ENCODE measurements at regions of chr1 and their contacts with region 1.

Region 1: DNA sequence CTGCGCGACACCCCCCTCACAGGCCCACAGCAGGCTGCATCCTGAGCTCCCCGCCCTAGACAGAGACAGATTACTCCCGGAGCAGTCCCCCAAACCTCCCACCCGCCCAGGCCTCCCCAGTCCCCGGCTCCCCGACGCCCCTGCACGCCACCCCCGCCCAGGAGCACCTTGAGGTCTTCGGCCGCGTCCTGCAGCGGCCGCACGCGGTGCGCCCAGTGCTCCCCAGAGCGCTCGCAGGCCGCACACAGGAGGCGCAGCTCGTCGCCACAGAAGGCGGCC is 709 bp downstream of the TRIM11 start:
- DNase-seq: no peak
- ATAC-seq: no peak
- H3K4me3 ChIP-seq: peak overlapping the region; percentile 74
- H3K4me3 Mint-ChIP-seq: peak overlapping the region; percentile 80 to 99 (median 94)
- H3K27ac ChIP-seq: peak overlapping the region; percentile 86
- H3K27ac Mint-ChIP-seq: peak overlapping the region; percentile 36 to 92 (median 80)
- H3K4me1 ChIP-seq: peaks cover 36 to 41% of the 10 kb centered on the region in 2 donors
- H3K4me1 Mint-ChIP-seq: peaks cover 46 to 77% (median 56%) of the 10 kb centered on the region in 7 donors
- H3K27me3 ChIP-seq: no peaks in the 10 kb centered on the region
- H3K27me3 Mint-ChIP-seq: no peaks in the 10 kb centered on the region

Region 2: GRCh38 chr1:227728059-227728891 is 677.7 kb before region 1 on chr1:
- CTCF ChIA-PET with region 1: no interaction called
- POLR2A ChIA-PET with region 1: no interaction called
- intact Hi-C with region 1: loop called in 1 of 2 experiments (anchors 5 kb)
- DNase-seq: peak in 7 of 9 donors; percentile 23 to 63 (median 39)
- ATAC-seq: peak; percentile 69
- H3K4me3 ChIP-seq: peak overlapping the region; percentile 59
- H3K4me3 Mint-ChIP-seq: peak overlapping the region; percentile 78 to 89 (median 87)
- H3K27ac ChIP-seq: peak overlapping the region; percentile 69
- H3K27ac Mint-ChIP-seq: peak overlapping the region; percentile 43 to 90 (median 74)
- H3K4me1 ChIP-seq: peaks cover 0 to 10% of the 10 kb centered on the region in 2 donors
- H3K4me1 Mint-ChIP-seq: peaks cover 6 to 29% (median 20%) of the 10 kb centered on the region in 7 donors
- H3K27me3 ChIP-seq: no peaks in the 10 kb centered on the region
- H3K27me3 Mint-ChIP-seq: peaks cover 0 to 11% (median 8%) of the 10 kb centered on the region in 5 donors

Region 3: GRCh38 chr1:228275739-228276421 is 130.0 kb before region 1 on chr1:
- CTCF ChIA-PET with region 1: no interaction called
- POLR2A ChIA-PET with region 1: no interaction called
- intact Hi-C with region 1: loop called (anchors 1 kb)
- DNase-seq: peak; percentile 53 to 88 (median 82)
- ATAC-seq: peak; percentile 96
- H3K4me3 ChIP-seq: peak overlapping the region; percentile 77
- H3K4me3 Mint-ChIP-seq: peak overlapping the region; percentile 71 to 88 (median 82)
- H3K27ac ChIP-seq: peak overlapping the region; percentile 77
- H3K27ac Mint-ChIP-seq: peak overlapping the region in 7 of 9 donors; percentile 21 to 73 (median 60)
- H3K4me1 ChIP-seq: no peaks in the 10 kb centered on the region
- H3K4me1 Mint-ChIP-seq: peaks cover 8 to 20% (median 19%) of the 10 kb centered on the region in 7 donors
- H3K27me3 ChIP-seq: no peaks in the 10 kb centered on the region
- H3K27me3 Mint-ChIP-seq: no peaks in the 10 kb centered on the region

Region 4: GRCh38 chr1:228416217-228416933 is 10.4 kb after region 1 on chr1 and contains the start of gene TRIM17:
- CTCF ChIA-PET with region 1: no interaction called
- POLR2A ChIA-PET with region 1: interaction called, 7 read pairs
- intact Hi-C with region 1: loop called in 1 of 2 experiments (anchors 1 kb)
- DNase-seq: peak in 8 of 9 donors; percentile 15 to 47 (median 31)
- ATAC-seq: peak; percentile 69
- H3K4me3 ChIP-seq: peak within 1 kb of the TSS; percentile 48
- H3K4me3 Mint-ChIP-seq: peak within 1 kb of the TSS; percentile 73 to 91 (median 86)
- H3K27ac ChIP-seq: peak within 1 kb of the TSS; percentile 11
- H3K27ac Mint-ChIP-seq: peak within 1 kb of the TSS in 8 of 9 donors; percentile 24 to 76 (median 38)
- H3K4me1 ChIP-seq: peaks cover 5 to 15% of the 10 kb centered on the region in 2 donors
- H3K4me1 Mint-ChIP-seq: peaks cover 8 to 30% (median 27%) of the 10 kb centered on the region in 7 donors
- H3K27me3 ChIP-seq: no peaks in the 10 kb centered on the region
- H3K27me3 Mint-ChIP-seq: peaks cover 0 to 45% (median 10%) of the 10 kb centered on the region in 5 donors
- total RNA-seq, gene TRIM17: 0.92 to 2.5 (median 1.8) TPM

Region 5: GRCh38 chr1:229507951-229508822 is 1102.3 kb after region 1 on chr1 and contains the start of gene NUP133:
- CTCF ChIA-PET with region 1: no interaction called
- POLR2A ChIA-PET with region 1: no interaction called
- intact Hi-C with region 1: loop called in 1 of 2 experiments (anchors 5 kb)
- DNase-seq: peak; percentile 93 to 97 (median 97)
- ATAC-seq: peak; percentile 98
- H3K4me3 ChIP-seq: peak within 1 kb of the TSS; percentile 91
- H3K4me3 Mint-ChIP-seq: peak within 1 kb of the TSS; percentile 90 to 98 (median 92)
- H3K27ac ChIP-seq: peak within 1 kb of the TSS; percentile 95
- H3K27ac Mint-ChIP-seq: peak within 1 kb of the TSS; percentile 95 to 99 (median 99)
- H3K4me1 ChIP-seq: peaks cover 4 to 13% of the 10 kb centered on the region in 2 donors
- H3K4me1 Mint-ChIP-seq: peaks cover 10 to 47% (median 38%) of the 10 kb centered on the region in 7 donors
- H3K27me3 ChIP-seq: no peaks in the 10 kb centered on the region
- H3K27me3 Mint-ChIP-seq: peaks cover 0 to 5% (median 2%) of the 10 kb centered on the region in 5 donors
- total RNA-seq, gene NUP133: 24.3 to 45.8 (median 40.4) TPM

Measured in naive thymus-derived CD4-positive, alpha-beta T cell (primary cell).